ENCODE measurements at regions of chr6 and their contacts with region 1.

Region 1: DNA sequence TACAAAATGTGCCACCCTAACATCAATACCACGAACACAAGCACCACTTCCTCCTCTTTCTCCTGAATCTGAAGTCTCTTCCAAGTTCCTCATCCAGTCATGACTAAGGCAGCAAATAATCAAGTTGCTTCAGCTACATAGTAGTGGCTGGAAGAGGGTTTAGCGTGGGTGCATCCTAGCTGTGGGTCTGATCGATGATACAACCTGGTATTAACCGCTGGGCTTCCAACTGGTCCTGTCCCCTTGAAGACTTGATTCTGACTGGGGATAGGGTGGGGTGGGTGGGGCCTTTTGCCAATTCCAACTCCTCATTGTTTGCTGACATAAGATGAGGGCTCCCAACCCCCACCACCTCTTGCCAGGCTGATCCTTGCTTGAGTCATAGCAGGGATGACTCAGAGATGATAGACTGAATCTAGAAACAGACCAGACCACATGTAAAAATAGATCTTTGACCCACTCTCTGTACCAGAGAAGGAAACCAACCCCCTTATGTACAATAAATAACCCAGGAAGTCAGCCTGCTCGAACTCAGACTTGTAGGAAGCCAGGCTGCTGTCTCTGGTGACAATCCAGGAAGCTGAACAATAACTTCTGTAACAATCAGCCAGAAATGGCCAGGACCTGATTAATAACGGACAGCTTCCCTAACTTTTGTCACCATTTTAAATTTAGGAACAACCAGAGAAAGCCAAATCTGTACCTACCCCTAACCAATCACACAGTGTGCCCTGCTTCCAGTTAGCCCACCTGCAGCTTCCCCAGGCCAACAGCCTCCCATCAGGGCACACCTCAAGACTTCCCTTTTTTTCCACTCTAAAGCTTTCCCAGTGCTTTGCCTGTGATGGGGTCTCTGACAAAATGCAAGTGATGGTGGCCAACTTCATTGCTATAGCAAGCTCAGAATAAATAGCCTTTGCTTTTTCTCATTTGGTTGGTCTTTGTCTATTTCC is 68.9 kb upstream of the FAM184A start:
- DNase-seq: peak; percentile 81
- H3K4me3 Mint-ChIP-seq: no peak overlapping the region
- H3K27ac Mint-ChIP-seq: peak overlapping the region; percentile 53
- H3K4me1 Mint-ChIP-seq: peaks cover 26% of the 10 kb centered on the region
- H3K27me3 Mint-ChIP-seq: no peaks in the 10 kb centered on the region
- CTCF ChIP-seq: no peak

Region 2: GRCh38 chr6:118485601-118486550 is 661.5 kb before region 1 on chr6:
- CTCF ChIA-PET with region 1: no interaction called
- intact Hi-C with region 1: no loop called
- DNase-seq: no peak
- H3K4me3 Mint-ChIP-seq: no peak overlapping the region
- H3K27ac Mint-ChIP-seq: no peak overlapping the region
- H3K4me1 Mint-ChIP-seq: no peaks in the 10 kb centered on the region
- H3K27me3 Mint-ChIP-seq: no peaks in the 10 kb centered on the region
- CTCF ChIP-seq: no peak

Region 3: GRCh38 chr6:118980063-118980462 is 167.3 kb before region 1 on chr6:
- CTCF ChIA-PET with region 1: no interaction called
- intact Hi-C with region 1: no loop called
- DNase-seq: peak; percentile 6
- H3K4me3 Mint-ChIP-seq: no peak overlapping the region
- H3K27ac Mint-ChIP-seq: no peak overlapping the region
- H3K4me1 Mint-ChIP-seq: no peaks in the 10 kb centered on the region
- H3K27me3 Mint-ChIP-seq: no peaks in the 10 kb centered on the region
- CTCF ChIP-seq: no peak

Region 4: DNA sequence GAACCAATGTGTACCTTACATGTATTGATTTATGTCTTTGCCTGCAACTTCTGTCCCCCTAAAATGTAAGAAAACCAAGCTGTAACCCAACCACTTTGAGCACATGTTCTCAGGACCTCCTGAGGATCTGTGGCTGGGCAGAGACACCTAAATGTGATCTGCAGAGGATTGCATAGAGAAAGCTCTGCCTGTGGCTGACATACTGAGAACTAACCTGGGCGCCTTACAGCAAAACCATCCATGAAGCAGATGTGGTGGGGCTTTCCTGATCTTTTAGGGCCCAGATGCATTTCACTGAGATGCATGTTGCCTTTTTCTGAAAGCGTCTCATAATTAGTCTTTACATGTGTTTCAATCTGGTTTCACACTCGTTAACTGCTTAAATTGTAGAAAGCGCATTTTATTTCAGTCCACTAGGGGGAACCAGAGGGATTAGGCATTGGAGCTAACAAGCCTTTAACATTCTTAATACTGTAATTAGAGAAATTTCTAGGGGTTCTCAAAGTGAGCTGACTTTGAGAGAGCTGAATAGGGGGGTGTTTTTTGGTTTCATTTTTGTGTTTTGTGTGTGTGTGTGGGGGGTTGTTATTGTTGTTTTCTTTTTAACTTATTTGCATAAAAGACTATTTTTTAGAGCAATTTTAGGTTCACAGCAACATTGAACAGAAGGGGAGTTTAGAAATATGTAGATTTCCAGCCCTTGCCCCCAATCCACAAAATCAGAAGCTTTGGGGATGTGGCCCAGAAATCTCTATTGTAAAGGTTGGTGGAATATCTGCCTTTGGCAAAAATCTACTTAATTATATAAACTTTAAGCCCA is 18.0 kb before region 1 on chr6:
- CTCF ChIA-PET with region 1: interaction called, 9 read pairs
- intact Hi-C with region 1: loop called (anchors 1 kb)
- DNase-seq: peak; percentile 46
- H3K4me3 Mint-ChIP-seq: no peak overlapping the region
- H3K27ac Mint-ChIP-seq: peak overlapping the region; percentile 34
- H3K4me1 Mint-ChIP-seq: peaks cover 30% of the 10 kb centered on the region
- H3K27me3 Mint-ChIP-seq: no peaks in the 10 kb centered on the region
- CTCF ChIP-seq: peak; percentile 54

Region 5: DNA sequence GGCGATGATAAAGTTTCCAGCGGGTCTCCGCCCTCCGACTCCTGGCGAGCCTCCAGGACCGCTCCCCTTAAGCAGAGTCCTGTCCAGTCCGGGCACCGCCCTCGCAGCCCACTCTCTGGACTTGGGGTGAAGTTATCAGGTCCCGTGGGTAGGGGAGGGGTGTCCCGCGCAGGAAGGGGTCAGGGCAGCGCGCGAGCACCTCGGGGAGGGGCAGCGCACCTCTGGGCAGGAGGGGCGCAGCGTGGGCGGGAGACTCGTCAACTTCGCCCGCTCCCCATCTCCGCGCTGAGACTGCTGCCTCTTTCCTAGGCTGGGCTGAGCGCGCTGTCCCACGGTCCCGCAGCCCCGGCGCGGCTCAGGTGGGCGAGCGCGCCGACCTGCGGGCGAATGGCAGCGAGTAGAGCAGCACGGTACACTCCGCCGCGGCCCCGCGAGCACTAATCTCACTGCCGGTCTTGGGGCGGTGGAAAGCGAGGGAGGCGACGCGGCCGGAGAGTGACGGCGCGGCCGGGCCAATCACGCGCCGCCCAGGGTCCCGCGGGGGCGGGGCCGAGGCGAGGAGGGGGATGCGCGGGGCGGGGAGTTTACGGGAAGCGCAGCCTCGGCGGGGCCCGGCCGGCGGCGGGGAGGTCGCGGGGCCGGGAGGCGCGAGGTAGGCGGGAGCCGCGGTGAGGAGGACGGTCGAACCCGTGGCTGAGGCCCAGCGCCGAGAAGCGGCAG is 202.1 kb after region 1 on chr6 and contains the start of gene MAN1A1:
- CTCF ChIA-PET with region 1: interaction called, 9 read pairs
- intact Hi-C with region 1: loop called (anchors 1 kb)
- DNase-seq: peak; percentile 85
- H3K4me3 Mint-ChIP-seq: peak within 1 kb of the TSS; percentile 77
- H3K27ac Mint-ChIP-seq: peak within 1 kb of the TSS; percentile 49
- H3K4me1 Mint-ChIP-seq: peaks cover 24% of the 10 kb centered on the region
- H3K27me3 Mint-ChIP-seq: no peaks in the 10 kb centered on the region
- CTCF ChIP-seq: no peak
- total RNA-seq, gene MAN1A1: 13.3 and 13.7 TPM in 2 replicates

Region 6: DNA sequence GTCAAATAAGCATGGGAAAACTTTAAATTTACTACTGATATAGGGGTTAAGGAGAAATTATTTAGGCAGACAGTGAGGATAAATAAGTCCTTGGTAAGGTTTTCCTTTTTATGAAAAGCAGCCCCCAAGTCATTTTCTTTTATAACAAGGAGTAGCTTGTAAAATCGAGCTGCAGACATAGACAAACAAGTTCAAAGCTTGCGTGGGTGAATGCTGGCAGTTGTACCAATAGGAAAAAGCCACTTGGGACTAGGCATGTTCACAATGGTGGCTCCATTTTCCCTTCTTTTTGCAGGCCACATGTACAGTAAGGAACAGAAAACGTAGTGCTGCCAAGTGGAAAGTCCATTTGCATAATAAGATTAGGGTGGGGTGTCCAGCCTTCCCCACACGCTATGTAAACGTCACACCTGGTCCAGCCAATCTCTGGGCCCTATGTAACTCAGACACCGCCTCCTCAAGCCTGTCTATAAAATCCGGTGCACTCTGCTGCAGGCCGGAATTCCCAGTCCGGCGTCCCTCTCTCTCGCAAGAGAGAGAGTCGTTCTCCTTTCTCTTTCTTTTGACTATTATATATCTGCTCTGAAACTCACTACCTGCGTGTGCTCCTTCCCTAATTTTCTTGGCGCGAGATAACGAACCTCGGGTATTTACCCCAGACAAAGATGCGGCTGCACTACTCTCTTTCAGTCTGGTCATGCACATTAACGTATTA is 419.3 kb after region 1 on chr6:
- CTCF ChIA-PET with region 1: no interaction called
- intact Hi-C with region 1: no loop called
- DNase-seq: no peak
- H3K4me3 Mint-ChIP-seq: no peak overlapping the region
- H3K27ac Mint-ChIP-seq: no peak overlapping the region
- H3K4me1 Mint-ChIP-seq: no peaks in the 10 kb centered on the region
- H3K27me3 Mint-ChIP-seq: no peaks in the 10 kb centered on the region
- CTCF ChIP-seq: no peak

Region 7: GRCh38 chr6:119742188-119742803 is 594.9 kb after region 1 on chr6:
- CTCF ChIA-PET with region 1: no interaction called
- intact Hi-C with region 1: loop called (anchors 5 kb)
- DNase-seq: peak; percentile 70
- H3K4me3 Mint-ChIP-seq: no peak overlapping the region
- H3K27ac Mint-ChIP-seq: no peak overlapping the region
- H3K4me1 Mint-ChIP-seq: no peaks in the 10 kb centered on the region
- H3K27me3 Mint-ChIP-seq: no peaks in the 10 kb centered on the region
- CTCF ChIP-seq: peak; percentile 81

Region 8: GRCh38 chr6:120378582-120379220 is 1231.3 kb after region 1 on chr6:
- CTCF ChIA-PET with region 1: no interaction called
- intact Hi-C with region 1: loop called (anchors 2 kb)
- DNase-seq: no peak
- H3K4me3 Mint-ChIP-seq: no peak overlapping the region
- H3K27ac Mint-ChIP-seq: no peak overlapping the region
- H3K4me1 Mint-ChIP-seq: peaks cover 5% of the 10 kb centered on the region
- H3K27me3 Mint-ChIP-seq: no peaks in the 10 kb centered on the region
- CTCF ChIP-seq: peak; percentile 55

Measured in Calu3 (cell line).